OCI-LY7 (cell line): ENCODE measurements at regions of chrX and their contacts with region 1.

Region 1: GRCh38 chrX:42809569-42809968 is 31.6 kb upstream of the PPP1R2C start:
- DNase-seq: no peak
- H3K4me3 ChIP-seq: no peak overlapping the region
- H3K27ac ChIP-seq: no peak overlapping the region
- H3K4me1 ChIP-seq: no peaks in the 10 kb centered on the region
- CTCF ChIP-seq: no peak

Region 2: DNA sequence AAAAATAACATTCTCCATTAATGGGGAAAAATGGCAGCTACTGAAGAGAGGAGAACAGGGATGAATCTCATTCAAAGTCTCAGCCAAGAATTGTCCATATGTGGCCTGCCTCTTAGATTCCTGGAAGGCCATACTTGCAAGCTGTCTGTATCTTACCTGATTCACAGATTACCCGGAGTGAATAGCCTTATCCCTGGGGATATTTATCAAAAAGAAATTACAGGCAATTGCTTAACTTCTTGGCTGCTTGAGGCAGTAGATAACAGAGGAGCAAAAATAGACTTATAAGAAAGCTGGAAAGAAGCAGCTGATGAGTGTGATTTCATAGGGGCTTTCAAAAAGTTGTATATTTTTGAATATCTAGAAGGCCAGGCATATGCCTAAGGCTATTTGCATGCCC is 37.2 kb after region 1 on chrX:
- CTCF ChIA-PET with region 1: no interaction called
- POLR2A ChIA-PET with region 1: no interaction called
- intact Hi-C with region 1: loop called (anchors 5 kb)
- DNase-seq: no peak
- H3K4me3 ChIP-seq: no peak overlapping the region
- H3K27ac ChIP-seq: no peak overlapping the region
- H3K4me1 ChIP-seq: peaks cover 8% of the 10 kb centered on the region
- CTCF ChIP-seq: no peak